ENCODE measurements at regions of chr6 and their contacts with region 1.

Region 1: DNA sequence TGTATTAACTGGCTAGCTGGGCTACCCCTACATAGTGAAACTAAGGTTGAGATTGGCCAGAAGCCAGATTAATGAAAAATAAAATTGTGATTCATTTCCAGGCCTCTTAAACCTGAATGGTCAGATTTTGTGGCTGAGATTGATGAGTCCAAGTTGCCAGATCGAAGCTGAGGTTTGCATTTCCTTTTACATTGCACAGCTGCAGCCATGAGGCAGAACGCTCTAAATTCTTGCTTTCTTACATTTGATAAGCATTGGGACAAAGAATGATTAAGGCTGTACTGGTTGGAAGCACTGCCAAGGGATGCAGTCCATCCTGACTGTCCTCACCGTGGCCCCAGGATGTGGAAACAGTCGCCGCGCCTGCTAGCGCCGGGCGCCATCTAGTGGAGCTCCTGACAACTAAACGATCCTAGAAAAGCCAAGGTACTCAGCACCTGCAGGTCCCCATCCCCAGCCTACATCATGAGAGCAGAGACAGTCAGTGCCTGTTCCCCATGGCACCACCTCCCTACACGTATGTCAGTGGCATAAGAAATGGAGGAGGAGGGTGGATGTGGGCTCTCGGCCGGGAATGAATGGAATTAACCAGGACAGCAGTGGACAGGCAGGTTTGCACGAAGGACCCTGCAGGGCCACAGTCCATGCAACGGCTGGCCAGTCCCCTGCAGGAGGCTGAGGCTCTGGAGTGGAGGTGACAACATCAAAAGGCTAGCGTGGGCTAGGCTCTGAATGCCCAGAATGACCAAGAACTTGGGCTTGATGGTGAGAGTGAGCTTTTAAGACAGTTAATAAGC is 19.0 kb downstream of the PXDC1 start:
- H3K4me3 ChIP-seq: no peak overlapping the region
- H3K27ac ChIP-seq: no peak overlapping the region
- H3K4me1 ChIP-seq: no peaks in the 10 kb centered on the region
- CTCF ChIP-seq: peak; percentile 88

Region 2: DNA sequence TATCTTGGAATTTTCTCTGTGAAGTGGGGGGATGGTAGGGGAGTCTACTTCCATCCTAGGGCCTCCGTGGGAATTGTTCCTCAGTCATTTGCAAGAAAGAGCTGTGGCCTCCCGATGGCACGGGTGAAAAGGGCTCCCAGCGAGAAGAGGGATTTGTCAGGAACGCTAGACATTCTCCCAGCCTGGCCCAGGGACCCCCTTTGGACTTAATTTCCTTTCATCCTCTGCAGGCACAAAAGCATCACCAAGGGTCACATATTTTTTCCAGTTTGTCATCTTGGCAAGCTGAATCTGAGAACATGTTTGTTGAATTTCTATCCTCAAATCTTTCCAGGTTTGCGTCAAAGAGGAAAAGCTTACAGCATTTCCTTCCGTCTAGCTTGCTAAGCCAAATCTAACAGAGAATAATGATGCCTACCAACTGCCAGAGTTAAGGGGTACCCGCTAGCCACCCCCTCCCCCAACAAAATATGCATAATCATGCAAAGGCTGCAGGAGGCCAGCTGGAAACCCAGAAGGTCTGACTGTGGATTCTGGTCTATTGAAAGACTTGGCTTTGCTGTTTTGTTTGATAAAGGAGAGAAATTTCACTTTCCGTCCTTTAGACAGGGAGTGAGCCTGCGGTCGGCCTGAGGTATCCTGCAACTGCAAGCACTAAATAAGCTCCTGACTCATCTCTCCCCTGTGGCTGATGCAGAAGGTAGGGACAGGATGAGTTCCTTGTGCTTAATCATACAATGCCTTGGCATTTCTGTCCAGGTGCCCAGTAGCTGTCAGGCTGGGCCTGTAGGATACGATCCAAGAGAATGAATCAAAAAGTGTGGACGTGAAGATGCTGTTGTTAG is 450.7 kb before region 1 on chr6:
- CTCF ChIA-PET with region 1: interaction called, 61 read pairs
- POLR2A ChIA-PET with region 1: no interaction called
- H3K4me3 ChIP-seq: no peak overlapping the region
- H3K27ac ChIP-seq: no peak overlapping the region
- H3K4me1 ChIP-seq: no peaks in the 10 kb centered on the region
- CTCF ChIP-seq: no peak

Region 3: DNA sequence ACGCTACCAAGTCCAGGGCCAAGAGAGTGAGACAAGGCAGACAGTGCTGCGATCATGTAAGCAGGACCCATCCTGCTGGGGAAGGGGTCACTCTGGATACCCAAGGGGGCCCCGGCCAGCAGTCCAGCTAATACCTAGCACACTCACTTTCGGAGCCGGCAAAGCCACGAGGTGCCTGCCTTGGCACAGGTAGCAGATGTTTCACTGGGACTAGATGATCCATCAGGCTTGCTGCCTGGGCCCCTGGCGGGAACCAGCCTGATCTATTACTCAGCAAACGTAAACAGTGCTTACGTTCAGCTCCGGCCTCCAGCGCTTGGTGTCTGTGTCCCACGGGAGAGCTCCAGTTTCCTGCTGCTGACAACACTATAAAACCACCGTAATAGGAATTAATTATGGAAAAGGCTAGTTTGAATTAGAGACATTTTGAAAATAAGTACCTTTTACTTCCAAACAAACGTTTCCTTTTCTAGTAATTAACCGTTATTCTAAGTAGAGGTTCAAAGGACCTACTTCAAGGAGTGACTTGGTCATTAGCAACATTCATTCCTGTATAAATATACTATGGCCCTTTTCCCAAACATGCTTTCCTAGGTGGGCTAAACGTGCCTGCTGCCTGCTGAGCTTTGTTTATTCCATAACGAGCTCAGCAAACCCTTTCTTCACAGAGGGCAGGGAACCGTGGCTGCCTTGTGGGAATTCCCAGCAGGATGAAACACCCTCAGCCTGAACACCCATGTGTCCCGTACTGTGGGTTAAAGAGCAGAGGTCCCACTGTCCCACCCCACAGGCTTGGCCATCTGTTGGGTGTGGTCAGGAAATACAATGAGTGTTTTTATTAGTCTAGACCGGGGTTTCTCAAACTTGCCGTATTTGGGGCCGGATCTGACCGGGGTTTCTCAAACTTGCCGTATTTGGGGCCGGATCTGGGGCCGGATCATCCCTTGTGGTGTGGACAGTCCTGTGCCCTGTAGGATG is 294.1 kb before region 1 on chr6:
- CTCF ChIA-PET with region 1: interaction called, 11 read pairs
- POLR2A ChIA-PET with region 1: no interaction called
- H3K4me3 ChIP-seq: no peak overlapping the region
- H3K27ac ChIP-seq: peak overlapping the region; percentile 88
- H3K4me1 ChIP-seq: peaks cover 23% of the 10 kb centered on the region
- CTCF ChIP-seq: no peak

Region 4: DNA sequence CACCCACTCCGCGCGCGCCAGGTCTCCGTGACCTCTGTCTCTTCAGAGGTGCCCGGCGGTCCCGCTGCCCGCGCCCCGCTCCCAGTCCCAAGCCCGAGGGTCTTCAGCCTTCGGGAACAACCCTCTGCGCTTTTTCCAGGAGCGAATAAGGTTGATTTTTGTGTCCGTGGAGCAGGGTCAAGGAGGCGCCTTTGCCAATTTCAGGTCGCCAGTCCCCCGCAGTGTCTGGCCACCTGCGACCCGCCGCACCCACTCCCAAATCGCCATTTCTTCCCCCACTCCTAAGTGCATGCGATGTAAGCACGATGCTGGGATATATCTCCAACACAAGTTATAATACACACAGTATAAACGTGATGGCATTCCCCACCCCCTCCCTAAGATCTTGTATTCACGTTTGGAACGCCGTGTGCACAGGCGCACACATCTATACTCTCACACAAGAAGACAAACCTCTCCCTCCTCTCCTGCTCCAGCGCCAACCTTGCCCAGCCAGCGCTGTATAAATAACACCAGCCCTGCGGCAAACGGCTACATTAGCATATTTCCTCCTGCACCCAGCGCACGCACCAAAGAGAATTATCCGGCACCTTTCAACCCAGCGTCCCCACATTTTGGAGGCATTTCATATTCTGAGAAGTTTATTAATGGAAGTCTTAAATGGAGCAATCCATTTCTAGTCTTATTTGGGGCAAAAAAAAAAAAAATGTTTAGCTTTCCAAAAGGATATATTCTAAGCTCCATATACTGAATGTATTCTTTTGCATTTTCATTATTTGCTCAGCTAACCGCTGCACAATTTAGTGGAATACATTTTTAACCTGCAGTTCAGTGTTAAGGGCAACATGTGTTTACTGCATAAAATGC is 274.8 kb before region 1 on chr6:
- CTCF ChIA-PET with region 1: interaction called, 11 read pairs
- POLR2A ChIA-PET with region 1: interaction called, 3 read pairs
- H3K4me3 ChIP-seq: peak overlapping the region; percentile 86
- H3K27ac ChIP-seq: peak overlapping the region; percentile 95
- H3K4me1 ChIP-seq: peaks cover 6% of the 10 kb centered on the region; the same call in 1 of the 2 replicates
- CTCF ChIP-seq: no peak

Region 5: DNA sequence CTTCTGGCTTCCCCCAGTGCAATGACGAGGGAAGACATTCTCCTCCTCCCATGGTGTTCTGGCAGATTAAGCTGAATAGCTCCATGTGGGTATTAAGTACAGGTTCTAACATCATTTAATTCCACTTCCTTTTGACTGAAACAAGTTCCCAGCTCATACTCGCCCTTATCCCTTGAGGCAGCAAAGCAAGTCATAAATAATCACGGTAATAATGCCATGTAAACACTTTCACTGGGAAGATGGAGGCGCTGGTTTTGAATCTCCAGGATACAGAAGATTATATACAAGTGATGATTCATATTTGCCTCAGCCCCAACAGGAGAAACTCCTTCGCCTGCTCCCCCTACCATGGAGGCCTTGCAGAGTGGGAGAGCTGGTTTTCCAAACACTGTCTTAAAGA is 122.3 kb before region 1 on chr6:
- CTCF ChIA-PET with region 1: interaction called, 11 read pairs
- POLR2A ChIA-PET with region 1: no interaction called
- H3K4me3 ChIP-seq: no peak overlapping the region
- H3K27ac ChIP-seq: peak overlapping the region; percentile 20; the same call in 1 of the 2 replicates
- H3K4me1 ChIP-seq: peaks cover 30% of the 10 kb centered on the region
- CTCF ChIP-seq: no peak

Region 6: DNA sequence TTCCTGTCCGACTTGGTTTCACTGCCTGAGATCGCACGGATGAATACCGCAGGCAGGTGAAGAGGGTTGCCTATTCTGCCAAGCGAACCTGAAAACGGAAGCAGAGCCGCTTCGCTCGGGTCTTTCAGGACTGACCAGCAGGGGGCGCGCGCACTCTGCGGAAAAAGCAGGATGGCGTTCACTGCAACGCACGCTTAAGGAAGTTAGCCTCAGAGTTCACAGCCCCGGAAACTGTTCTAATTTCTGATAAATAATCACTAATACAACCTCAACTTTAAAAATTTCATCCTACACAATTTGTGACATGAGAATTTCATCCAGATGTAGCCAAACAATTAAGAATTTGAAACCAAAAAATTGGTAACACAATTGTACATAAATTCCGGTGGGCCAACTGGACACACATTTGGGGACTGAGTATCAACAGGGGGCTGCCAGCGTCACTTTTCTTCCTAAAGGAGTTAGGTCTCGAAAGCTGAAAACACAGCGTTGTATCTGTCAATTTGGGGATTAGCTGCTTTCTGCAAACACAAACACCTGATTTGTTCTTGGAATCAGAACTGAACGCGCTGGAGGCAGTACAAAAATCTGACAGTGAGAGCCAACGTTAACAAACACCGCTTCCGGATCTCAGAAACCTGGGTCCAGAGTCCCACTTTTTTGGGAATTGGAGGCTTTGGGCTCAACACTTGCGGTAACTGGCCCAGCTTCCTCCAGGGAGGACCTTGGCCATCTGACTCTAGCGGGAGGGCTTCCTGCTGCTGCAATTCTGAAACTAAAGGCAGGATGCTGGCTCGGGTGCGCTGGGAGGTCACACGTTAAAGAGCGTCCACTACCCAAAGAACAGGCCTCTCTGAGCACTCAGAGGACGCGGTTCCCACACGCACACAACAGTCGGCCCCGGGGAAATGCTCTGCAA is 10.1 kb after region 1 on chr6:
- CTCF ChIA-PET with region 1: interaction called, 36 read pairs
- POLR2A ChIA-PET with region 1: no interaction called
- H3K4me3 ChIP-seq: no peak overlapping the region
- H3K27ac ChIP-seq: no peak overlapping the region
- H3K4me1 ChIP-seq: peaks cover 6% of the 10 kb centered on the region; the same call in 1 of the 2 replicates
- CTCF ChIP-seq: peak; percentile 79

Region 7: GRCh38 chr6:3900744-3901341 is 168.3 kb after region 1 on chr6:
- CTCF ChIA-PET with region 1: no interaction called
- POLR2A ChIA-PET with region 1: no interaction called
- H3K4me3 ChIP-seq: no peak overlapping the region
- H3K27ac ChIP-seq: no peak overlapping the region
- H3K4me1 ChIP-seq: no peaks in the 10 kb centered on the region; the same call in 1 of the 2 replicates
- CTCF ChIP-seq: no peak